Posterior vena cava (tissue), 2 donors: ENCODE measurements at regions of chr13 and their contacts with region 1.

Region 1: DNA sequence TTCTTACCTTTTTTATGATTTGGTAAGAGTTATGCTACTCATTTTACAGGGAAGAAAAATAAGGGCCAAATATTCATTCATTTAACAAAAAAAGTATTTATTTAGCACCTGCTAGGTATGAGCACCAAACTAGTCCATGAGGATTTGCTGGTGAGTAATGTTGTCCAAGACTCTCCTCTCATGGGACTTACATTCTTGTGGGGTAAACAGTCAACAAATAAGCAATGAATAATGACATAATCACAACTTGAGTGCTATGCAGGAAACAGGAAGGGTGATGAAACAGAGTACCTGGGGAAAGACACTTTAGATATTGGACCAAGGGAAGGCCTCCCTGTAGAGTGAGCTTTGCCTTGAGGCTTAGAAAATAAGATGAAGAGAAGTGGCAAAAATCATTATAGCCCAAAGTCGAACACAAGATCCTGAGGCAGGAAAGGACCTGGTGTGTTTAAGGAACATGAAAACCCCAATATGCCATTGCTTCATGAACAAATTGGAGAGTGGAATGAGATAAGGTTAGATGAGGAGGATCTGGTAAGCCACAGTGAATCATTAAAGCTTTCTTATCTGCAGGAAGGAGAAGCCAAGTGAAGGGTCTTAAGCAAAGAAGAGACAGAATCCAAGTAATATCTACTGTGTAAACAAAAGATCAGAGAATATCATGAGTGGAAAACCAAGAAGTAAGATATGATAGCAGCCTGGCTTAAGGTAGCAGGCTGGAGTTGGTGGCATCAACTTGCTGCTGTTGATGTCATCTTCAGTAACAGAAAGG is 294.5 kb upstream of the NBEA start:
- DNase-seq: no peak

Region 2: DNA sequence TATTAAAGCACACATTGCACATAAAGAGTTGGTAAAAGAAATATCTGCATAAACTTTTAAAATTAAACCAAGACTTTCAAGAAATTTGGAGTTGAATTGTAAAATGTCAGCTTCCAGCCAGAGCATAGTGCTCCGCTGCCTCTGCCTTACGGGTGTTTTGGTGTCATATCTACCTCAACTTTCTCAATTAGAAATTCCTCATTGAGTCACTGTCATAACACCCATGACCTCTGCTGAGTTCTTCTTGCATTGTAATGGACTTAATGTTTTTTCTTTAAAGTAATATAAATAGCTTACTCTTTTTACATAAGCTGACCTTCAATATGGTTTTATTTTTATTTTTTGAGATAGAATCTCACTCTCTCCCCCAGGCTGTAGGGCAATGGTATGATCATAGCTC is 256.5 kb before region 1 on chr13:
- intact Hi-C with region 1: loop called in 1 of 2 experiments (anchors 5 kb)
- DNase-seq: no peak

Region 3: GRCh38 chr13:36612242-36612641 is 1964.7 kb after region 1 on chr13:
- intact Hi-C with region 1: loop called in 1 of 2 experiments (anchors 5 kb)
- DNase-seq: no peak